HEK293T (cell line): ENCODE measurements at regions of chr22 and their contacts with region 1.

Region 1: DNA sequence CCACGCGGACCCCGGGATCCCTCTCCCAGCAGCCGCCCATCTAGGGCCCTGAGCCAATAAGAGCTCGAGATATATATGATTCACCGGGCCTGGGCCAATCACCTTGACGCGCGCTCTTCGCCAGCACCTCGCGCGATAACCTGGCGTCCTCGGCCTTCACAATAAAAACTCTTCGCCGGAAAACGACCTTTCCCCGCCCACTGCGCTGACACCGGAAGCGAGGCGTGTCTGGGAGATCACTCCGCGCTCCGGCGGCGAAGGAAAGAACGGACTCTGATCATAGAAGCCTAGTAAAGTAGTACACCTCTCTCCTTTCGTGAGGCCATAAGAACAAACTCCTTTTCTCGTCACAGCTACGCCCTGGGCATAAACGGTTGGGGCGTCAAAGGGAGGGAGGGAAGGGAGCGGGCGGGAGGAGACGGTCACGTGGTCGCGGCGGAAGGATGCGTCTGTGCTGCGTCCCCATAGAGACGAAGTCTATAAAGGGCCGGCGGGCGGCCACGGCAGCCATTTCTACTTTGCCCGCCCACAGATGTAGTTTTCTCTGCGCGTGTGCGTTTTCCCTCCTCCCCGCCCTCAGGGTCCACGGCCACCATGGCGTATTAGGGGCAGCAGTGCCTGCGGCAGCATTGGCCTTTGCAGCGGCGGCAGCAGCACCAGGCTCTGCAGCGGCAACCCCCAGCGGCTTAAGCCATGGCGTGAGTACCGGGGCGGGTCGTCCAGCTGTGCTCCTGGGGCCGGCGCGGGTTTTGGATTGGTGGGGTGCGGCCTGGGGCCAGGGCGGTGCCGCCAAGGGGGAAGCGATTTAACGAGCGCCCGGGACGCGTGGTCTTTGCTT is at the start of gene ATF4:
- DNase-seq: peak; percentile 96

Region 2: DNA sequence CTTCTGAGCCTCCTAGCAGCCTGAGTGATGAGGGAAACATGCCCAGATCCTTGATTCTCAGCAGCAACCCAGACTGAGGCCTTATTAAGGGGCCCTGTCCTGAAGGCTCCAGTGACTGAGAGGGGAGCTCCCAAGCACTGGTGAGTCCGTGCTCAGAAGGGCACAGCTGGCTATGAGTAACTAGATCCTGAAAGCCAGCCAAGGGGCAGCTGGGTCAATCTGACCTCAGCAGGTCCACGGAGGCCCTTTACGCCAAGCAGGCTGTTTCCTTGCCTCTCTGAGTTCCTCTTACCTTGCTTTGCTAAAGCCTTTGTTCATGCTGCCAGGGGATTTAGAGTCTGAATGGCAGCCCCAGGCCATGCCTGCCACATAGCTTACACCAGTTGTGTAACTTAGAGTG is 37.5 kb before region 1 on chr22:
- CTCF ChIA-PET with region 1: no interaction called
- POLR2A ChIA-PET with region 1: interaction called, 10 read pairs
- DNase-seq: no peak

Region 3: DNA sequence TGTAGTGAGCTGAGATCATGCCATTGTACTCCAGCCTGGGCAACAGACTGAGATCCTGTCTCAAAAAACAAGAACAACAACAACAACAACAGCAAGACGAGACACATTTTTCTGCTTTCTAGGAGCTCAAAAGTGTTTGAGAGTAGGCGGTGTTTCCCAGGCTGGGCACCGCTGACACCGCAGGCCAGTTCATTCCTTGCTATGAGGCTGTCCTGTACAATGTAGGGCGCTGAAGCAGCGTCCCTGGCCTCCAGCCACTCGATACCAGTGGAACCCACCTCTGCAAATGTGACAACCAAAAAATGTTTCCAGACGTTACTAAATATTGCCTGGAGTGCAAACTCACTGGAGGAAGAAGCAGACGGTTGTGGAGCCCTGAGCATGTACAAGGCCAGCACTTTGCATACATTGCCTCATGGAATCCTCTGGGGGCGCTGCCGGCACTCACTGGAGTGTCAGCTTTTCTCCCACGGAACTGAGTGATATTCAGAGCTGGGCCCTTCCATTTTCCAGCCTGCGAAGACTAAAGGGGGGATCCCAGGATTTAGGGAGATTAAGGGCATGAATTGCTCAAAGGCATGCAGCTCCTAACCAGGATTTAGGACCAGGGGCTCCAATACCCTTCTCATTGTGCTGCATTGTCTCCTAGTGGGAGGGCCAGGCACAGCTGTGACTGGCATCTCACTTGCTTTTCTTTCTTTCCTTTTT is 24.0 kb before region 1 on chr22:
- CTCF ChIA-PET with region 1: interaction called, 13 read pairs
- POLR2A ChIA-PET with region 1: interaction called, 100 read pairs
- DNase-seq: peak; percentile 81

Region 4: GRCh38 chr22:39508393-39508792 is 11.9 kb before region 1 on chr22:
- CTCF ChIA-PET with region 1: interaction called, 7 read pairs
- POLR2A ChIA-PET with region 1: interaction called, 100 read pairs
- DNase-seq: no peak

Region 5: DNA sequence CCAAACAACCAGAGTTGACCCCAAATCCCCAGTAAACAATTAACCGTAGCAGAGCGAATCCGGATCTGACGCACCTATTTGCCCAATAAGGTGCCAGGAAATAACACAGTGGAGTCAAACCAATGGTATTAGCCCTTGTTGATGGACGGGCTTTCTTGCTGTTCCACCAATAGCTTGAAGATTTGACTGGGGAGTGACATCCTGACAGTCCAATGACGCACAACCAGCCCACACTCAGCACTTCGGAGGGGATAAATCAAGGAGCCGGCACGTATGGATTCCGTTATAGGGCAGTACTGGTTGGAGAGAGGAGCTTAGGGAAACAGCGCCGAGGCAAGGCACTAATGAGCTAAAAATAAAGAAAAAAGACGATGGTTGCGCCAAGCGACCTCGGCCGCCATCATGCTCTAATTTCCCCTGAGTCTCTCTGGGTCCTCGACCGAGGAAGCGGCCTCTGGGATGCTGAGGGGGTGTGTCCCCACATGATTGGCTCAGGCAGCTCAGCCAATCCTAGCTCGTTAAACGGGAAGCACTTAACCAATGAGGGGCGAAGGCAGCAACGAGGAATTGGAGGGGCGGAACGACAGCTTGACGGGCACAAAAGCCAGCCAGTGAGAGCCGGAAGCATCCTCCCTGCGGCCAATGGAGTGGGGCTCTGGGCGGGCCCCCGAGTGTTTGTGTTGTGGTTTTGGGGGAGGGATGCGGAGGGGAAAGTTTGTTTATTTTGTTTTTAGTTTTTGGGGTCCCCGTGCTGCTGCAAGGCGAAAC is 524.0 kb after region 1 on chr22:
- CTCF ChIA-PET with region 1: interaction called, 3 read pairs
- POLR2A ChIA-PET with region 1: interaction called, 14 read pairs
- DNase-seq: peak; percentile 99